ENCODE measurements at regions of chr2 and their contacts with region 1.

Region 1: GRCh38 chr2:100242891-100243619 is 79.2 kb downstream of the LONRF2 start:
- DNase-seq: peak; percentile 68
- H3K4me3 Mint-ChIP-seq: no peak overlapping the region
- H3K27ac Mint-ChIP-seq: no peak overlapping the region
- H3K4me1 Mint-ChIP-seq: no peaks in the 10 kb centered on the region
- H3K27me3 Mint-ChIP-seq: no peaks in the 10 kb centered on the region
- CTCF ChIP-seq: peak; percentile 91

Region 2: DNA sequence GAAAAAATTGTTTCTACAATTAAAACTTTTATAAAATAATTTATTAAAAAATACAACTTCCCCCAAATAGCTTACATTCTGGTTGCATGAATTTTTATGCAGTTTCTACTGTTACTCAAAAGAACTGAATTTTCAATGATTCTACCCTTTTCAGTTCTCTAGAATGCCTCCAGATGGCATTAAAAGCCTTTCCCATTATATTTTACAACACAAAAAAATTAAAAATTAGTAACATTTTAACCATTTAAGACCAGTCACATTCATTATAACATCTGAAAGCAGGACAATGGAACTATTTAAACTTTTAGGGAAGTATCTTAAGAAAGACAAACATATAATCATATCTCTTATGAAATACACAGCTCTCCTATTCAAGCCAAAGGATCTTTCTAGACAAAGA is 517.2 kb before region 1 on chr2:
- CTCF ChIA-PET with region 1: interaction called, 5 read pairs
- POLR2A ChIA-PET with region 1: no interaction called
- intact Hi-C with region 1: loop called (anchors 2 kb)
- DNase-seq: no peak
- H3K4me3 Mint-ChIP-seq: no peak overlapping the region
- H3K27ac Mint-ChIP-seq: no peak overlapping the region
- H3K4me1 Mint-ChIP-seq: no peaks in the 10 kb centered on the region
- H3K27me3 Mint-ChIP-seq: no peaks in the 10 kb centered on the region
- CTCF ChIP-seq: peak; percentile 32

Region 3: GRCh38 chr2:99818842-99819241 is 424.2 kb before region 1 on chr2:
- CTCF ChIA-PET with region 1: interaction called, 24 read pairs
- POLR2A ChIA-PET with region 1: interaction called, 3 read pairs
- intact Hi-C with region 1: loop called (anchors 1 kb)
- DNase-seq: peak; percentile 46
- H3K4me3 Mint-ChIP-seq: no peak overlapping the region
- H3K27ac Mint-ChIP-seq: no peak overlapping the region
- H3K4me1 Mint-ChIP-seq: peaks cover 4% of the 10 kb centered on the region
- H3K27me3 Mint-ChIP-seq: peaks cover 9% of the 10 kb centered on the region
- CTCF ChIP-seq: peak; percentile 55